Activated CD4-positive, alpha-beta memory T cell treated with anti-CD3 and anti-CD28 coated beads for 36 hours (primary cell): ENCODE measurements at regions of chr12 and their contacts with region 1.

Region 1: DNA sequence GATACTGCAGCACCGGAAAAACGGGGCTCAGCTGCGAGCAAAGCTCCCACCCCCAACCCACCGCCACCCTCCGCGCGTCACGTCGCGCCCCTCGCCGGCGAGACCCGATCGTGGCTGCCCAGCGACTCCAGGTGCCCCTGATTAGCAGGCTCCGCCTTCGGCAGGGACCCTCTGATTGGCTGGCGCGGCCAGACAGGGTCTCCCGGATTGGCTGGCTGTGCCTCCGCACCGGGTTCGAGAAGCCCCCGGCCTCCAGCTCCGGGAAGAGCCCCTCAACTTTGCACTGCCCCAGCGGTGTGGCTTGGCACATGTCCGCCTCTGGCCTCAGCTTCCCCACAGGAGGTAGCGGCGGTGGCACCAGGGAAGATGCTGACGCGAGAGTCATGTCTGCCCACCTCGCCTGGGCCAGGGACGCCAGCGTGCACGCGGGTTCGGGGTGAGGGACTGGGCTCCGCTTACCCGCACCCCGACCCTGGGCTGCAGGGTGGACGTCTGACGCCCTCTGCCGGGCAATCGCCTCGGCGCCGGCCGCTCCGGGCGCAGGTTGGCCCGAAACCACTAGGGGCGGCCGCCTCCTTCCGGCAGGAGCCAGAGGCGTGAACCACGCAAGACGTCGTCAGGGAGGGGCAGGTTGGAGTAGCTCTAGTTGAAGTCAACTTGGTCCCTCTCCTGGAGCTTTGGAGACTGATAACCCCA is 498 bp upstream of the RHOF start:
- DNase-seq: peak; percentile 98
- H3K4me3 Mint-ChIP-seq: peak overlapping the region; percentile 88
- H3K27ac Mint-ChIP-seq: peak overlapping the region; percentile 94
- H3K4me1 Mint-ChIP-seq: peaks cover 58% of the 10 kb centered on the region
- H3K27me3 Mint-ChIP-seq: no peaks in the 10 kb centered on the region

Region 2: DNA sequence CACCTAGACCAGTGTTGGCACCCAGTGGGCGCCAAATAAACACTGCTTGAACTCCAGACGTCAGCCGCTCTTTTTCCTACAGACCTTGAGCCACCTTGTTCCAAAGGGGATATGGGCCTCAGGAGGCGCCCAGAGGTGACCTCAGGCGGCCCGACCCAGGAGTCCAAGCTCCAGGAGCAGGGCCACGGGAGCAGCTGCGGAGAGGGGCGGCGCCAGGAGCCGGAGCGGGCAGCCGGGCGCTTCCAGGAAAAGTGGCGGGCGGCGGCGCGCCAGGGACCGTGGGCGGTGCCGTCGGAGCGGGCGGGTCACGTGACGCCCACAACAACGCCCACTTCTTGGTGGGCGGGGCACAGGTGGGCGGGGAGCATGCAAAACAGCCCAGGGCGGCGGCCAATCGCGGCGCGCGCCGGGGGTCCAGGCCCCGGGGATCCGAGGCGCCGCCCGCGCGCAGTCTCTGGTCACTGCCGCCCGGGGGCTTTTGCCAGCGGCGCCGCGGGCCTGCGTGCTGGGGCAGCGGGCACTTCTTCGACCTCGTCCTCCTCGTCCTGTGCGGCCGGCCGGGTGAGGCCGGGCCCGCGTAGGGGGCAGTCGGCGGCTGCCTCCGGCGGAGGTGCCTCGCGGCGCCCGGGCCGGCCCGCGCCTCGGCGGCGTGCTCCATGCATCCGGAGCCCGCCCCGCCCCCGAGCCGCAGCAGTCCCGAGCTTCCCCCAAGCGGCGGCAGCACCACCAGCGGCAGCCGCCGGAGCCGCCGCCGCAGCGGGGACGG is 167.7 kb before region 1 on chr12 and contains the start of gene ORAI1:
- CTCF ChIA-PET with region 1: interaction called, 7 read pairs
- POLR2A ChIA-PET with region 1: no interaction called
- intact Hi-C with region 1: loop called (anchors 2 kb)
- DNase-seq: peak; percentile 96
- H3K4me3 Mint-ChIP-seq: peak within 1 kb of the TSS; percentile 92
- H3K27ac Mint-ChIP-seq: peak within 1 kb of the TSS; percentile 99
- H3K4me1 Mint-ChIP-seq: peaks cover 37% of the 10 kb centered on the region
- H3K27me3 Mint-ChIP-seq: no peaks in the 10 kb centered on the region
- total RNA-seq, gene ORAI1: 41.6 to 43.2 TPM

Region 3: GRCh38 chr12:121712461-121713256 is 81.3 kb before region 1 on chr12 and contains the start of gene TMEM120B:
- CTCF ChIA-PET with region 1: interaction called, 60 read pairs
- POLR2A ChIA-PET with region 1: interaction called, 9 read pairs
- intact Hi-C with region 1: loop called (anchors 1 kb)
- DNase-seq: peak; percentile 86
- H3K4me3 Mint-ChIP-seq: peak within 1 kb of the TSS; percentile 89
- H3K27ac Mint-ChIP-seq: peak within 1 kb of the TSS; percentile 59
- H3K4me1 Mint-ChIP-seq: peaks cover 16% of the 10 kb centered on the region
- H3K27me3 Mint-ChIP-seq: no peaks in the 10 kb centered on the region
- total RNA-seq, gene TMEM120B: 8.8 to 9.5 TPM

Region 4: GRCh38 chr12:121811434-121812319 is 17.7 kb after region 1 on chr12:
- CTCF ChIA-PET with region 1: interaction called, 856 read pairs
- POLR2A ChIA-PET with region 1: interaction called, 86 read pairs
- intact Hi-C with region 1: loop called (anchors 1 kb)
- DNase-seq: peak; percentile 77
- H3K4me3 Mint-ChIP-seq: peak overlapping the region; percentile 79
- H3K27ac Mint-ChIP-seq: peak overlapping the region; percentile 78
- H3K4me1 Mint-ChIP-seq: peaks cover 44% of the 10 kb centered on the region
- H3K27me3 Mint-ChIP-seq: no peaks in the 10 kb centered on the region

Region 5: GRCh38 chr12:121883315-121883660 is 89.3 kb after region 1 on chr12:
- CTCF ChIA-PET with region 1: interaction called, 117 read pairs
- POLR2A ChIA-PET with region 1: interaction called, 3 read pairs
- intact Hi-C with region 1: loop called (anchors 1 kb)
- DNase-seq: no peak
- H3K4me3 Mint-ChIP-seq: no peak overlapping the region
- H3K27ac Mint-ChIP-seq: no peak overlapping the region
- H3K4me1 Mint-ChIP-seq: peaks cover 9% of the 10 kb centered on the region
- H3K27me3 Mint-ChIP-seq: no peaks in the 10 kb centered on the region

Region 6: DNA sequence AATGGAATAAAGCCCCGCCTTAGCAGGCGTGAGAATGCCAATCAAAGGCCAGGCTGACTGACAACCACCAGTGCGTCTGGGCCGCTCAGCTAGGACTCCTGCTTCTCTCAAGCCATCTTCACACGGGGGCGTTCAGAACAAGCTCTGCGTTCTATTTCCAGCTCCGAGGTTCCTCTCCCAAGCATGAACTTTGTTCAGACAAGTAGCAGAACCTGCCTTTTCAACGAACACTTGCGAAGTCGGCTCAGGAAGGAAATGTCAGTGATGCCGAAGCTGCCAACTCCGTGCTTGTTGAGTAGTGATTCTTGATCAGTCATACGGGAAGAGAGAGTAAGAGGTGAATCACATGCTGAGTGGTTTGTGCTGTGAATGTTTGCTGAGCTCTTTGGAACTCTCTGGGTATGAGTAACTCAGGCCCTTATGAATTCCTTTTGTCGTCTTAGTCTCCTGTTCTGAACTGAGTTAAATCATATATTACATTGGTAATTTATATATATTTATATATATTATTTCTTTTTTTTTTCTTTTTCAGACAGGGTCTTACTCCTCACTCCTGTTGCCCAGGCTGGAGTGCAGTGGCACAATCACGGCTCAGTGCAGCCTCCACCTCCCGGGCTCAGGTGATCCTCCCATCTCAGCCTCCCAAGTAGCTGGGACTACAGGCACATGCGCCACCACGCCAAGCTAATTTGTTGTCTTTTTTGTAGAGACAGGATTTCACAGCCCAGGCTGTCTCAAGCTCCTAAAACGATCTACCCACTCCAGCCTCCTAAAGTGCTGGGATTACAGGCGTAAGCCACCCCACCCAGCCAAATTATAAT is 198.3 kb after region 1 on chr12:
- CTCF ChIA-PET with region 1: interaction called, 5 read pairs
- POLR2A ChIA-PET with region 1: no interaction called
- intact Hi-C with region 1: loop called (anchors 5 kb)
- DNase-seq: peak; percentile 85
- H3K4me3 Mint-ChIP-seq: peak overlapping the region; percentile 38
- H3K27ac Mint-ChIP-seq: peak overlapping the region; percentile 84
- H3K4me1 Mint-ChIP-seq: peaks cover 20% of the 10 kb centered on the region
- H3K27me3 Mint-ChIP-seq: peaks cover 3% of the 10 kb centered on the region